Posterior vena cava (tissue), 2 donors: ENCODE measurements at regions of chr1 and their contacts with region 1.

Region 1: GRCh38 chr1:109579491-109579890 is 31.1 kb downstream of the GNAI3 start:
- DNase-seq: no peak

Region 2: DNA sequence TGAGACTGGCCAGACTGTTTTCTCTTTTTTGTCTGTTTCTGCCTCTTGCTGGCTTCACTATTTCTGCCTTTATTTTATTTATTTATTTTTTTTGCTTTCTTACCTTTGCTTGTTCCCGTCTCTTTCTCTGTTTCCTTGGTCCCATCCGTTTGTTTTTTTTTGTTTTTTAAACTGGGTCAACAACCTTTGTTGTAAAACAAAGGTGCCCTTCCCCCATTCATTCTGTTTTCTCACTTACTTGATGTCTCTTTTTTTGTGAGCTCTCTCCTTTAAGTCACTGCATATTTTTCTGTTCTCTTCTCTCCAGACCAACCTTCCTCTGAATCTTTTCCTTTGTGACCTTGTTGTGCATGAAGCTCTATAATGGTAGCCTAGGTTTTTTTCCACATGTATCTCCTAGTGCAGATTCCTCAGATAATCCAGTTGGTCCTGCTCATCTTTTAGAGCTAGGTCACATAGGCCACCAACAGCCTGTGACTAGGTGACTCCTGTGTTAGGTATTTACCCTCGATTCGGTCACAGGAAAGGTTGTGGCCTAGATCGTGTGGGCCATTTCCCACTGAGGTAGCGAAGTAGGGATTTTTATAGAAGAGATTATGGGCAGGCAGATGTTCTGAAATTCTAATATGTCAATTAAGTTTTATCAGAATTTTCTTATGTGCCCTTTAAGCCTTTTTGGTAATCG is 15.2 kb before region 1 on chr1:
- intact Hi-C with region 1: no loop called
- DNase-seq: no peak

Region 3: GRCh38 chr1:109655601-109656519 is 76.4 kb after region 1 on chr1 and contains the start of gene GSTM4:
- intact Hi-C with region 1: loop called in 1 of 2 experiments (anchors 5 kb)
- DNase-seq: peak; percentile 95
- total RNA-seq, gene GSTM4: 21.2 to 35.4 TPM